ENCODE measurements at regions of chr7 and their contacts with region 1.

Region 1: GRCh38 chr7:100407285-100408180 is 21.0 kb downstream of the ZCWPW1 start:
- DNase-seq: peak; percentile 28
- H3K4me3 Mint-ChIP-seq: no peak overlapping the region
- H3K27ac Mint-ChIP-seq: no peak overlapping the region
- H3K4me1 Mint-ChIP-seq: peaks cover 2% of the 10 kb centered on the region
- H3K27me3 Mint-ChIP-seq: peaks cover 21% of the 10 kb centered on the region

Region 2: GRCh38 chr7:100353006-100353684 is 54.4 kb before region 1 on chr7:
- CTCF ChIA-PET with region 1: no interaction called
- POLR2A ChIA-PET with region 1: no interaction called
- DNase-seq: no peak
- H3K4me3 Mint-ChIP-seq: peak overlapping the region; percentile 30
- H3K27ac Mint-ChIP-seq: peak overlapping the region; percentile 75
- H3K4me1 Mint-ChIP-seq: peaks cover 27% of the 10 kb centered on the region
- H3K27me3 Mint-ChIP-seq: no peaks in the 10 kb centered on the region

Region 3: DNA sequence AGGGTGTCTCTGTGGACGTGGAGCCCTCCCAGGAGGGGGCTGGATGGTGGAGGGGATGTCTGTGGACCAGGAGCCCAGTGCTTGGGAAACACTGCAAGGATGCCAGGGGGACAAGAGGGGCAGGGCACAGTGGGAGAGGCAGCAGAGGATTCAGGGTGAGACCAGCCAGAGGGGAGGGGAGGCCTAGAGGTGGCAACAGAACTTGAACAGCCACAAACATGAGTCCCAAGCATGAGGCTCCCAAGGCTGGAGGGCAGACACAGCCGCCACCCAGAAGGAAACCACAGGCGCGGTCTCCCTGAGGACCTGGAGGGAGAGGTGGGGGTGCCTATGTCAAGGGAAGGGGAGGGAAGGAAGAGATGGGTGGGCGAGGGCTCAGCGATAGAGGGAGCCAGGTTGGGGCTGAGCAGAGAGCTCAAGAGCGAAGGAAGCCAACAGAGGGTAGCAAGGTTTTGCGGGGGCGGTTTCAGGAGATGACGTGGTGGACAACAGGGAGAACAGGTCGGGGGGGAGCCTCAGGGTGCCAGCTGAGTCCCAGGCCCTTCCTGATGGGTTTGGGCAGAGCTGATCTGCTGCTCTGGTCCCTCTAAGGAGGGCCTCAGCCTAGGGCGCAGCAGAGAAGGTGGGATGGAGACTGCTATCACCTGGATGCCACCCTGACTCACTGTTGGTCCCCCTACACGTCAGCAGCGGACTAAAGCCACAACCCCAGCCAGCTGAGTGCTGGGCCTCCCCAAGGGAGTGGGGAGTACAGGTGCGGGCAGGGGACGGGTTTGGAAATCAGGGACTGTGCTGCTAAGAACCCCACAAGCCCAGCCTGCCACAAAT is 40.9 kb before region 1 on chr7:
- CTCF ChIA-PET with region 1: interaction called, 14 read pairs
- POLR2A ChIA-PET with region 1: interaction called, 4 read pairs
- DNase-seq: no peak
- H3K4me3 Mint-ChIP-seq: no peak overlapping the region
- H3K27ac Mint-ChIP-seq: peak overlapping the region; percentile 50
- H3K4me1 Mint-ChIP-seq: peaks cover 32% of the 10 kb centered on the region
- H3K27me3 Mint-ChIP-seq: no peaks in the 10 kb centered on the region

Region 4: DNA sequence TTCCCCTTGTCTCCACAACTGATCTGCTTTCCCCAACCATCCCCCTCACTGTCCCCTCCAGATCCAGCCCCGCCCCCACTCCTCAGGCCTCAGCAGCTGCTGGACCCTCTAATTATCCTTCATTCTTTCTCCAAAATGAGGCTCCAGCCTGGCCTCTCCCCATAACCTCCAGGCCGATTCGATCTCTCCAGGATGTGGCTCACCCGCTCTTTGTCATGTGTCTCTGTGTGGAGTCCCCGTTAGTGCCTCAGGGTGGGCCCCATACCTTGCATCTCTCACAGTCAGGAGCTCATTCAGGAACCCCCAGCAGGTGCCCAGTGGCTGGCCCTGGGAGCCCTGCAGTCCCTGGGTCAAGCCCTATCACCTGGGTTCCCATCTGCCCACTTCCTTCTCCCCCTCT is 32.9 kb before region 1 on chr7:
- CTCF ChIA-PET with region 1: interaction called, 14 read pairs
- POLR2A ChIA-PET with region 1: no interaction called
- DNase-seq: no peak
- H3K4me3 Mint-ChIP-seq: no peak overlapping the region
- H3K27ac Mint-ChIP-seq: no peak overlapping the region
- H3K4me1 Mint-ChIP-seq: peaks cover 20% of the 10 kb centered on the region
- H3K27me3 Mint-ChIP-seq: no peaks in the 10 kb centered on the region

Region 5: GRCh38 chr7:100393233-100393905 is 14.2 kb before region 1 on chr7:
- CTCF ChIA-PET with region 1: interaction called, 20 read pairs
- POLR2A ChIA-PET with region 1: no interaction called
- DNase-seq: no peak
- H3K4me3 Mint-ChIP-seq: no peak overlapping the region
- H3K27ac Mint-ChIP-seq: no peak overlapping the region
- H3K4me1 Mint-ChIP-seq: peaks cover 22% of the 10 kb centered on the region
- H3K27me3 Mint-ChIP-seq: peaks cover 31% of the 10 kb centered on the region

Region 6: GRCh38 chr7:100419660-100420226 is 12.2 kb after region 1 on chr7:
- CTCF ChIA-PET with region 1: interaction called, 13 read pairs
- POLR2A ChIA-PET with region 1: interaction called, 4 read pairs
- DNase-seq: no peak
- H3K4me3 Mint-ChIP-seq: no peak overlapping the region
- H3K27ac Mint-ChIP-seq: no peak overlapping the region
- H3K4me1 Mint-ChIP-seq: no peaks in the 10 kb centered on the region
- H3K27me3 Mint-ChIP-seq: no peaks in the 10 kb centered on the region